ENCODE measurements at regions of chr1 and their contacts with region 1.

Region 1: GRCh38 chr1:47918257-47918867 is 78.8 kb downstream of the TRABD2B start:
- DNase-seq: peak; percentile 91
- ATAC-seq: peak; percentile 74
- H3K4me3 ChIP-seq: peak overlapping the region; percentile 15 to 65 (median 31); a peak in 5 of 6 replicates
- H3K27ac ChIP-seq: peak overlapping the region; percentile 85
- H3K4me1 ChIP-seq: peaks cover 100% of the 10 kb centered on the region
- H3K27me3 ChIP-seq: no peaks in the 10 kb centered on the region
- CTCF ChIP-seq: no peak
- EP300 ChIP-seq: no peak; a peak in 1 of 4 replicates
- POLR2A ChIP-seq: peak; percentile 27 to 49; a peak in 3 of 4 replicates
- RAD21 ChIP-seq: no peak

Region 2: GRCh38 chr1:47738560-47739182 is 179.7 kb before region 1 on chr1:
- CTCF ChIA-PET with region 1: no interaction called
- POLR2A ChIA-PET with region 1: no interaction called
- in situ Hi-C with region 1: no loop called
- intact Hi-C with region 1: loop called (anchors 5 kb)
- DNase-seq: peak; percentile 35
- ATAC-seq: peak; percentile 93
- H3K4me3 ChIP-seq: no peak overlapping the region
- H3K27ac ChIP-seq: no peak overlapping the region
- H3K4me1 ChIP-seq: no peaks in the 10 kb centered on the region
- H3K27me3 ChIP-seq: peaks cover 3% of the 10 kb centered on the region in 2 experiments; a peak in 2 of 5 replicates
- CTCF ChIP-seq: peak; percentile 89
- EP300 ChIP-seq: no peak
- POLR2A ChIP-seq: no peak
- RAD21 ChIP-seq: peak; percentile 56

Region 3: DNA sequence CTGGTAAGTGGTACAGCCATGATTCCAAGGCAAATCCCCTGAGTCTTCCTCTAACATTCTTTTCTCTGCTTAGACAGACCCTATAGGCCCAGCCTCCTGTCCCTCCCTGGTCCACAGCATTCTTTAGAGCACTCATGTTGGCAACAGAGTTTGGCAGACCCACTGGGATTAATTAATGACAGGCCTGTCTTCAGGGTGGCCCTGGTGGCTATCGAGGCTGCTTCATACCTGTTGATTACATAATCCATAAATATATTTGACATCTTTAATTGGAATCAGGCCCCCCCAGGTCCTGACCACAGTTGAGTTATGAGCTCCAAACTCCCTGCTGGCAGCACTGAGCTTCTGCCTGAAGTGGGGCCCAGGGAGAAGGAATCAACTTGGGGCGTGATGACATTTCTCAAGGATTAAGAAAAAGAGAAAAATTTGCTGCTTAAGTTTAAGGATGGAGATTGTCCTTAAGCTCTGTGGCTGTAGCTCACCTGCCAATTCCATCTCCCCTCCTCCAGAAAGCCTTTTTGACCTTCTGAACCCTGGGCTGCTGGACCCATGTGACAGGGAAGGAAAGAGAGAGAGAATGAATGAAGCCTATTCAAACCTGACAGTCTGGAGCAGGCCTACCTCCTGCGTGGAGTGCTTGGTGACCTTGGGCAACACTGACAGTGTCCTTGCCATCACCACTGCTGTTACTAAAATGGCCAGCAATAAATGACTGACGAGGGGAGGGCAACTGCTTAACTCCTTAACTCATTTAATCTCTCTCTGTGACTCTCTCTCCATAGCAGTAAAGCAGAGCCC is 77.8 kb before region 1 on chr1:
- CTCF ChIA-PET with region 1: no interaction called
- POLR2A ChIA-PET with region 1: interaction called, 19 read pairs
- in situ Hi-C with region 1: no loop called
- intact Hi-C with region 1: loop called (anchors 2 kb)
- DNase-seq: peak; percentile 85
- ATAC-seq: peak; percentile 72
- H3K4me3 ChIP-seq: 0 out of 6 replicates have a peak overlapping the region, but pooled peaks of 1 of the 3 experiments have one; percentile 4
- H3K27ac ChIP-seq: peak overlapping the region; percentile 67
- H3K4me1 ChIP-seq: peaks cover 91% of the 10 kb centered on the region
- H3K27me3 ChIP-seq: no peaks in the 10 kb centered on the region
- CTCF ChIP-seq: no peak
- EP300 ChIP-seq: peak in 1 of 2 experiments; percentile 70; a peak in 2 of 4 replicates
- POLR2A ChIP-seq: 0 out of 4 replicates have a peak, but pooled peaks of 1 of the 2 experiments have one; percentile 19
- RAD21 ChIP-seq: no peak

Region 4: GRCh38 chr1:47866601-47867437 is 51.5 kb before region 1 on chr1:
- CTCF ChIA-PET with region 1: no interaction called
- POLR2A ChIA-PET with region 1: interaction called, 44 read pairs
- in situ Hi-C with region 1: no loop called
- intact Hi-C with region 1: loop called (anchors 1 kb)
- DNase-seq: peak; percentile 96
- ATAC-seq: peak; percentile 90
- H3K4me3 ChIP-seq: peak overlapping the region; percentile 14 to 53 (median 15); a peak in 4 of 6 replicates
- H3K27ac ChIP-seq: peak overlapping the region; percentile 97
- H3K4me1 ChIP-seq: peaks cover 83% of the 10 kb centered on the region
- H3K27me3 ChIP-seq: no peaks in the 10 kb centered on the region
- CTCF ChIP-seq: peak; percentile 33
- EP300 ChIP-seq: peak; percentile 31 to 91; a peak in 3 of 4 replicates
- POLR2A ChIP-seq: peak; percentile 53 to 65; a peak in 3 of 4 replicates
- RAD21 ChIP-seq: no peak

Region 5: DNA sequence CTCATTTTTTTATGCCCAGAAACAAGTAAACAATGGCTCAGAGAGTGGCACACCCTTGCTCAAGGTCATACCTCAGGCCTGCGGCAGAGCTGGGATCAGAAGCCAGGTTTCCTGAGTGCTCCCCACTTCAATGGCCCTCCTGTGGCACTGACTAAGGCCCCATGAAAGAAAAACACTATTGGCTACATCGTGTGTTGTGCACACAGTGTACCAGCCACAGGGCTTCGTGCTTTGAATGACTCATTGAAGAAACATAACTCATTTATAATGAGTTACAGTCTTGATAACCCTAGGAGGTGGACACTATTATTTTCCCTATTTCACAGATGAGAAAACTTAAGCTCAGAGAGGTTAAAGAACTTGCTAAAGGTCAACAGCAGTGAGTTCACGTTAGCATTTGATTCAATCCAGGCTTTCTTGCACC is 12.3 kb before region 1 on chr1:
- CTCF ChIA-PET with region 1: no interaction called
- POLR2A ChIA-PET with region 1: interaction called, 42 read pairs
- in situ Hi-C with region 1: no loop called
- intact Hi-C with region 1: no loop called
- DNase-seq: peak; percentile 75
- ATAC-seq: peak; percentile 80
- H3K4me3 ChIP-seq: no peak overlapping the region
- H3K27ac ChIP-seq: no peak overlapping the region
- H3K4me1 ChIP-seq: peaks cover 86% of the 10 kb centered on the region
- H3K27me3 ChIP-seq: no peaks in the 10 kb centered on the region
- CTCF ChIP-seq: no peak
- EP300 ChIP-seq: peak in 1 of 2 experiments; percentile 35; a peak in 1 of 4 replicates
- POLR2A ChIP-seq: no peak
- RAD21 ChIP-seq: no peak

Region 6: DNA sequence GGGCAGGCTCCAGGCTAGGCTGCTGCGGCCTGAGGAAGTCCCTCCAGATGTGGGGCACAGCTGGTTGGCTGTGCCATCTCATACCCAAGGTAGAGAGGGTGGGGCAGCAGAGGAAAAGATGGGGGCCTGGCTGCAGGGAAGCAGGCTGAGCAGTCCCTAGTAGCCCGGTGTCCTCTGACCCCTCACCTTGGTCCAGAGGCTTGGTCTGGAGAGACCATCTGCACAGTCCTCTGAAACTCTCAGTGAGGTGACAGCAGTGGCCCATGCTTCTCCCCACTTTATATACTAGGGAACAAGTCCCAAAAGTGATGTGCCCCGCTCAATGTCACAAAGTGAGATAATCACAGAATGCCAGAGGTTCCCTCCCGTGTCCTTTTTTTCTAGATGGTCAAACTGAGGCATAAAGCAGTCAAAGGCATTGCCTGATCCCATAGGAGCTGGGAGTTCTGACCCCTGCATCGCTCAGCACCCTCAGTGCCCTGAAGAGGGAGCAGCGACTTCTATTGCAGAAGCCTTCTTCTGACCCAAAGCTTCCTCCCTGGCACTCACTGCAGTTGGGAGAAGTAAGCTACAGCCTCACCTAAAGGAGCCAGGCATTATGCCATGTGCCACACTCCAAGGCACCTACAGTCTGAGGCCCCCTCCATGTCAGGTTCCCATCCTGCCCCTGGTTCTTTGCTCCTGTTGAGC is 33.3 kb after region 1 on chr1:
- CTCF ChIA-PET with region 1: no interaction called
- POLR2A ChIA-PET with region 1: no interaction called
- in situ Hi-C with region 1: no loop called
- intact Hi-C with region 1: no loop called
- DNase-seq: no peak
- ATAC-seq: peak; percentile 80
- H3K4me3 ChIP-seq: no peak overlapping the region
- H3K27ac ChIP-seq: no peak overlapping the region
- H3K4me1 ChIP-seq: peaks cover 10% of the 10 kb centered on the region
- H3K27me3 ChIP-seq: peaks cover 4 to 20% of the 10 kb centered on the region in 2 experiments; a peak in 4 of 5 replicates
- CTCF ChIP-seq: peak; percentile 40
- EP300 ChIP-seq: no peak
- POLR2A ChIP-seq: no peak
- RAD21 ChIP-seq: no peak

Measured in HepG2 (cell line).